ENCODE measurements at regions of chr11 and their contacts with region 1.

Region 1: DNA sequence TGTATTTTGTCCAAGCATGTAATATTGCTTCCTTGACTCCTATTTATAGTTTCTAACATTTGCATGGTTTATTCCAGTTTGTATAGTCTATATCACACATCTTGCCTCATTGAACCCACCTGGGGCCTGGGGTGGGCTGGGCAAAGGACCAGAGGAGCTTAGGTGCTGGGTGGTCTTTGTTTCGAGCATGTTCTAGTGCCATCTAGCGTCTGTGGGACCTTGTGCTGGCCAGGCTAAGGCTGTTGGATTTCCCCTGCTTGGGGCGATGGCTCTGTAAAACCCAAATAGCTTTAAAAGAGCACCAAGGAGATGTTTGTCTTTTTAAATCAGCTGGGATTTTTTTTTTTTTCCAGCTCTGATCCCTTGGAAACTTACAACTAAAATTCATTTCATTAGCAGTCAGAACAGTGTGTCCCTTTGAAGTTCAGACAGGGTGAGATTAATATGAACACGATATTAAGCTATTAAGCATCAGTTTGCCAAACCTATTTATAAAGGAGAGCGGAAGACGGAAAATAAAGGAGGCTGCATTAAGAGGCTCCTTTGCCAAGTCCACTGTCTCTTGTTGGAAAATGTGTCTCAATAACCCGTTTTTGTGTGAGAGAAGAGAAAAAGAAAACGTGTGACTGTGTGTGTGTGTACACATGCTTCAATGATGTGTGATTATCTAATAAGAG is 157.4 kb downstream of the COMMD9 start:
- DNase-seq: peak; percentile 39 to 73 (median 54)
- ATAC-seq: peak; percentile 97
- H3K4me3 ChIP-seq: no peak overlapping the region
- H3K27ac ChIP-seq: no peak overlapping the region
- H3K4me1 ChIP-seq: peaks cover 0 to 5% of the 10 kb centered on the region in 2 experiments; a peak in 3 of 5 replicates
- H3K27me3 ChIP-seq: no peaks in the 10 kb centered on the region
- CTCF ChIP-seq: peak; percentile 80 to 88 (median 84)
- EP300 ChIP-seq: no peak
- POLR2A ChIP-seq: no peak
- RAD21 ChIP-seq: peak; percentile 92

Region 2: GRCh38 chr11:35822815-35823495 is 308.9 kb before region 1 on chr11:
- CTCF ChIA-PET with region 1: no interaction called
- POLR2A ChIA-PET with region 1: no interaction called
- in situ Hi-C with region 1: no loop called
- intact Hi-C with region 1: loop called (anchors 5 kb)
- DNase-seq: no peak
- ATAC-seq: no peak
- H3K4me3 ChIP-seq: no peak overlapping the region
- H3K27ac ChIP-seq: no peak overlapping the region
- H3K4me1 ChIP-seq: no peaks in the 10 kb centered on the region; a peak in 2 of 5 replicates
- H3K27me3 ChIP-seq: peaks cover 3 to 16% of the 10 kb centered on the region in 2 experiments; a peak in 3 of 5 replicates
- CTCF ChIP-seq: no peak
- EP300 ChIP-seq: no peak
- POLR2A ChIP-seq: no peak
- RAD21 ChIP-seq: no peak

Region 3: GRCh38 chr11:35943713-35944655 is 187.9 kb before region 1 on chr11 and contains the start of gene LDLRAD3:
- CTCF ChIA-PET with region 1: no interaction called
- POLR2A ChIA-PET with region 1: no interaction called
- in situ Hi-C with region 1: no loop called
- intact Hi-C with region 1: loop called (anchors 10 kb)
- DNase-seq: peak; percentile 79 to 92 (median 89)
- ATAC-seq: peak; percentile 95
- H3K4me3 ChIP-seq: peak within 1 kb of the TSS; percentile 49
- H3K27ac ChIP-seq: no peak within 1 kb of the TSS; the same call in 2 of the 3 replicates
- H3K4me1 ChIP-seq: peaks cover 5 to 16% of the 10 kb centered on the region in 2 experiments; a peak in 4 of 5 replicates
- H3K27me3 ChIP-seq: peaks cover 16 to 22% of the 10 kb centered on the region in 2 experiments; a peak in 4 of 5 replicates
- CTCF ChIP-seq: no peak
- EP300 ChIP-seq: no peak
- POLR2A ChIP-seq: no peak
- RAD21 ChIP-seq: no peak
- polyA plus RNA-seq, gene LDLRAD3: 0.73 to 1.3 TPM

Region 4: DNA sequence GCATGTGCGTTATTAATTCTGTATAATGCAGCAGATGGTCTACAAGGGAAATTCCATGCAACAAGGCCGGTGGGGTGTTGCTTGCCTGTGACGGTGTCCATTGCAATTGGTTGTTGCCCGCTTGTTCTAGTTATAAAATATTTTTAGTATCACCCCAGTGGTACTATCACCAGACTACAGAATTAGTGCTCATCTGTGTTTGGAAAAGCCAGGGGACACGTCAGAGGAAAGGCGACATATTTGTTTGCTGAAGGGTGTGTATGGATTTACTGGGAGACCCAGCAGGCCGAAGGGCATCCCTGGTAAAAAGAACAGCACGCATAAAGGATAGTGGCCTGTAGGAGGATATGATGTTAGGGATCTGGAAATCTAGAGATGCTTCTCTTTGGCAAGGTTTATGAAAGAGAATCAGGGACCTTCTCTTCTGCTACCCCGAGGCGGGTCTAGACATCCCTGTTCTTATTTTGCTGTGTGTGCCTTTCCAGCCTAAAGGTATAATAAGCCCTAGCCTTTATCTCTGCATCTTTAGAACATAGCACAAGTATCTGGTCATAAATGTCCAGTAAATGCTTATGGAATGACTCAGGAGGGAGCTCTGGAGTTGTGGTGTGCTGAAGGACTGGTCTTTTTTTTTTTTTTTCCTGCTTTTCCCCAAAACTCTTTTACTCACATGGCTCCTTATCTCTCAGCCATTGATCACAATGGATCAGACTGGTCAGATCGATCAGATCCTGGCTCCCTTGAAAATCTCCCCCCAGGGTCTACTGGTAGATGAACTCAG is 97.1 kb before region 1 on chr11:
- CTCF ChIA-PET with region 1: interaction called, 4 read pairs
- POLR2A ChIA-PET with region 1: no interaction called
- in situ Hi-C with region 1: loop called (anchors 5 kb)
- intact Hi-C with region 1: no loop called
- DNase-seq: no peak
- ATAC-seq: no peak
- H3K4me3 ChIP-seq: no peak overlapping the region
- H3K27ac ChIP-seq: no peak overlapping the region
- H3K4me1 ChIP-seq: no peaks in the 10 kb centered on the region; a peak in 2 of 5 replicates
- H3K27me3 ChIP-seq: peaks cover 0 to 6% of the 10 kb centered on the region in 2 experiments; a peak in 1 of 5 replicates
- CTCF ChIP-seq: peak in 1 of 3 experiments; percentile 27; a peak in 1 of 6 replicates
- EP300 ChIP-seq: no peak
- POLR2A ChIP-seq: no peak
- RAD21 ChIP-seq: peak; percentile 22 to 39

Region 5: DNA sequence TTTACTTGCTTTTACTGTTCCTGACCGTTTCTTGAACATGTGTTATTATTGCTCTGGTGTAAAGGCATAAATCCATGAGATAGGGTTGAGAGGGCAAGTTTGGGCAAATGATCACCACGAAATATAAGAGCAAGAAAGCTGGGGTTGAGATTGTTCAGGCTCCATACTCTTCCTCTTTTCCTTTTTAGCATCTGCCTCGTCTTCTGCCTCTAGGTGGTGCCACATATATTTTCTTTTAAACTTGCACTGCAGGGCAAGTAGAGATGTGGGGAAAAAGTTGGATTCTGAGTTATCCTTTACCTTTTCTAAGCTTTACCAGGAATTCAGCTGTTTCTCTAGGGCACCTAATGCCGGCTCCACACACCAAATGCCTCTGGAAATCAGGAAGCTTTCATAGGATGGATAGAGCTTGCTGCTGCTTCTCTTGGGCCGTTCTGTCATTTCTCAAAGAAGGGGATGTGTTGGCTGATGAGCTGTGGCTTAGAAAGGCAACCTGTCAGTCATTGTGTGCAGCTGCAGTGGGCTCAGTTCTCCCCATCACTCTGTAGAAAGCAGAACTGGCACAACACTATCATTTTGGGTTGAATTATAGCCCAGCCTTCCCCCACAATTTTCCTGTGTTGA is 89.8 kb before region 1 on chr11:
- CTCF ChIA-PET with region 1: interaction called, 4 read pairs
- POLR2A ChIA-PET with region 1: no interaction called
- in situ Hi-C with region 1: no loop called
- intact Hi-C with region 1: loop called (anchors 1 kb)
- DNase-seq: peak in 3 of 4 experiments; percentile 15 to 53 (median 30)
- ATAC-seq: peak; percentile 86
- H3K4me3 ChIP-seq: no peak overlapping the region
- H3K27ac ChIP-seq: no peak overlapping the region
- H3K4me1 ChIP-seq: no peaks in the 10 kb centered on the region
- H3K27me3 ChIP-seq: no peaks in the 10 kb centered on the region
- CTCF ChIP-seq: peak; percentile 51 to 73 (median 54); a peak in 5 of 6 replicates
- EP300 ChIP-seq: no peak
- POLR2A ChIP-seq: no peak
- RAD21 ChIP-seq: peak; percentile 82 to 85

Region 6: DNA sequence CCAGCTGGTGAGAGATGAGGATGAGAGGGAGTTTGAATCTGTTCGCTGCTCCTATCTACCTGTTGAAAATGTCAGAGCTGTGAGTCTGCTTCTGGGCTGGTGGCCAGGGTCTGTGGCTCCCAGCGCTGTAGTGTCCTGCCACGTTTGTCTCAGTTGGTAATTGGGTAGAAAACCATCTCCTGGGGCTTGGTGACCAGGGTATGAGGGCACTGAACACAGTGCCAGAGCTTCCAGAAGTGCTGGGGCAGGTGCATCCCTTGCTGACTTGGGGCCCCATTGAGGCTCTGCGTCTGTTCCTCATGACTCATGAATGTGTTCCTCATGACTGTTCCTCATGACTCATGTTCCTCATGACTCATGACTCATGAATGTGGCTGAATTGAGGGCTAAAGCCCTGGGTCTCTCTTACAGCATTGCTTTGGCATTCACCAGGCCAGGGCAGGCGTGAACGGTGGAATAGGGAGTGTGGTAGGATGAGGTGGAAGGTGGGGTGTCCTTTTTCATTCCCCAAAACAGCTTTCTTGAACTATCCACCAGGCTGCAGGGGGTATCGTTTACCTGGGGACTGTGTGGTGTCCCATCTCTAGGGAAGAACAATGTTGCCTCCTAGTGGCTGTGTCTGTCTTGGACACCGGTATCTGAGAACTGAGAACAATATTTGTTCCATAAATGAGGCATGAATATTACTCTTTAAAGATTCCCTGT is 17.8 kb after region 1 on chr11:
- CTCF ChIA-PET with region 1: no interaction called
- POLR2A ChIA-PET with region 1: interaction called, 3 read pairs
- in situ Hi-C with region 1: no loop called
- intact Hi-C with region 1: loop called (anchors 1 kb)
- DNase-seq: peak; percentile 84 to 90 (median 88)
- ATAC-seq: peak; percentile 98
- H3K4me3 ChIP-seq: no peak overlapping the region
- H3K27ac ChIP-seq: peak overlapping the region; percentile 82; the same call in 2 of the 3 replicates
- H3K4me1 ChIP-seq: peaks cover 12 to 18% of the 10 kb centered on the region in 2 experiments
- H3K27me3 ChIP-seq: no peaks in the 10 kb centered on the region
- CTCF ChIP-seq: peak; percentile 75 to 92 (median 88)
- EP300 ChIP-seq: peak; percentile 93
- POLR2A ChIP-seq: no peak
- RAD21 ChIP-seq: peak; percentile 88 to 94

Region 7: DNA sequence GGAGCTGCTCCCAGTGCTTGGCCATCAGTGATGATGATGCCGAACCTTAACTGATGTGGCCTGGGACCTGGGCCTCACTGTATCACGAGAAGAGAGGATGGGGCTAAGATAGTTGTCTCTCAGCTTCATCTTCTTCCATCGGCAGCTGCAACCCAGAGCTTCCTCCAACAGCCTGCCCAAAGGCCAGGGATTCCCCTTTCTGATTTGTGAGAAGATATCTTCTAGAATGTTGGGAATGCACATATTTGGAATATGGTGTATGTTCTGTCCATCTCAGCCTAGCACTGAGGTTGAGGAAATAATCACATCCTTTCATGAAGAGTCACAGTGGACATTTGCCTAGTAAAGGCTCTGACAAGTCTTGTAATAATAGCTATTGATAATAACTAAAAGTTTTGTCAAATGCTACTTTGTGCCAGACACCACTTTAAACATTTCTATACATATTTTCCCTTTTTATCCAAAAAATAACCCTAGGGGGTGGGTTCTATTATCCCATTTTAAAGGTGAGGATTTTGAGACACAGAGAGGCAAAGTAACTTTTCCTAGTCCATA is 84.3 kb after region 1 on chr11:
- CTCF ChIA-PET with region 1: no interaction called
- POLR2A ChIA-PET with region 1: no interaction called
- in situ Hi-C with region 1: no loop called
- intact Hi-C with region 1: no loop called
- DNase-seq: no peak
- ATAC-seq: no peak
- H3K4me3 ChIP-seq: no peak overlapping the region
- H3K27ac ChIP-seq: no peak overlapping the region
- H3K4me1 ChIP-seq: no peaks in the 10 kb centered on the region
- H3K27me3 ChIP-seq: peaks cover 0 to 27% of the 10 kb centered on the region in 2 experiments; a peak in 4 of 5 replicates
- CTCF ChIP-seq: no peak
- EP300 ChIP-seq: no peak
- POLR2A ChIP-seq: no peak
- RAD21 ChIP-seq: no peak

Region 8: GRCh38 chr11:36455658-36456111 is 323.8 kb after region 1 on chr11:
- CTCF ChIA-PET with region 1: no interaction called
- POLR2A ChIA-PET with region 1: no interaction called
- in situ Hi-C with region 1: no loop called
- intact Hi-C with region 1: no loop called
- DNase-seq: peak in 1 of 4 experiments; percentile 11
- ATAC-seq: peak; percentile 47
- H3K4me3 ChIP-seq: no peak overlapping the region
- H3K27ac ChIP-seq: no peak overlapping the region
- H3K4me1 ChIP-seq: peaks cover 6 to 13% of the 10 kb centered on the region in 2 experiments; a peak in 3 of 5 replicates
- H3K27me3 ChIP-seq: peaks cover 2 to 37% of the 10 kb centered on the region in 2 experiments; a peak in 3 of 5 replicates
- CTCF ChIP-seq: no peak
- EP300 ChIP-seq: no peak
- POLR2A ChIP-seq: no peak
- RAD21 ChIP-seq: no peak